ENCODE measurements at regions of chr3 and their contacts with region 1.

Region 1: GRCh38 chr3:49007068-49007770 is at the start of gene WDR6:
- DNase-seq: peak; percentile 95
- ATAC-seq: peak; percentile 92
- H3K4me3 Mint-ChIP-seq: peak within 1 kb of the TSS; percentile 96
- H3K27ac Mint-ChIP-seq: peak within 1 kb of the TSS; percentile 99
- H3K4me1 Mint-ChIP-seq: peaks cover 18% of the 10 kb centered on the region
- H3K27me3 Mint-ChIP-seq: no peaks in the 10 kb centered on the region
- total RNA-seq, gene WDR6: 185 to 207 TPM

Region 2: GRCh38 chr3:48898383-48899234 is 108.6 kb before region 1 on chr3 and contains the start of gene SLC25A20:
- POLR2A ChIA-PET with region 1: interaction called, 12 read pairs
- DNase-seq: peak; percentile 96
- ATAC-seq: peak; percentile 93
- H3K4me3 Mint-ChIP-seq: peak within 1 kb of the TSS; percentile 95
- H3K27ac Mint-ChIP-seq: peak within 1 kb of the TSS; percentile 93
- H3K4me1 Mint-ChIP-seq: peaks cover 35% of the 10 kb centered on the region
- H3K27me3 Mint-ChIP-seq: no peaks in the 10 kb centered on the region
- total RNA-seq, gene SLC25A20: 27.5 to 28.3 TPM

Region 3: GRCh38 chr3:48926425-48927392 is 80.5 kb before region 1 on chr3:
- POLR2A ChIA-PET with region 1: no interaction called
- DNase-seq: no peak
- ATAC-seq: peak; percentile 42
- H3K4me3 Mint-ChIP-seq: peak overlapping the region; percentile 51
- H3K27ac Mint-ChIP-seq: peak overlapping the region; percentile 77
- H3K4me1 Mint-ChIP-seq: peaks cover 48% of the 10 kb centered on the region
- H3K27me3 Mint-ChIP-seq: no peaks in the 10 kb centered on the region

Region 4: GRCh38 chr3:48989796-48990635 is 17.2 kb before region 1 on chr3 and contains the start of gene P4HTM:
- POLR2A ChIA-PET with region 1: interaction called, 112 read pairs
- DNase-seq: peak; percentile 84
- ATAC-seq: peak; percentile 81
- H3K4me3 Mint-ChIP-seq: peak within 1 kb of the TSS; percentile 88
- H3K27ac Mint-ChIP-seq: peak within 1 kb of the TSS; percentile 91
- H3K4me1 Mint-ChIP-seq: peaks cover 38% of the 10 kb centered on the region
- H3K27me3 Mint-ChIP-seq: no peaks in the 10 kb centered on the region
- total RNA-seq, gene P4HTM: 57.4 to 57.7 TPM

Region 5: GRCh38 chr3:49021813-49022687 is 14.8 kb after region 1 on chr3 and contains the start of gene NDUFAF3:
- POLR2A ChIA-PET with region 1: interaction called, 244 read pairs
- DNase-seq: peak; percentile 95
- ATAC-seq: peak; percentile 71
- H3K4me3 Mint-ChIP-seq: peak within 1 kb of the TSS; percentile 96
- H3K27ac Mint-ChIP-seq: peak within 1 kb of the TSS; percentile 98
- H3K4me1 Mint-ChIP-seq: peaks cover 31% of the 10 kb centered on the region
- H3K27me3 Mint-ChIP-seq: no peaks in the 10 kb centered on the region
- total RNA-seq, gene NDUFAF3: 78.9 to 82.4 TPM

Region 6: GRCh38 chr3:49028673-49029562 is 21.7 kb after region 1 on chr3 and contains the start of gene IMPDH2:
- POLR2A ChIA-PET with region 1: interaction called, 244 read pairs
- DNase-seq: peak; percentile 96
- ATAC-seq: peak; percentile 92
- H3K4me3 Mint-ChIP-seq: peak within 1 kb of the TSS; percentile 94
- H3K27ac Mint-ChIP-seq: peak within 1 kb of the TSS; percentile 85
- H3K4me1 Mint-ChIP-seq: peaks cover 37% of the 10 kb centered on the region
- H3K27me3 Mint-ChIP-seq: no peaks in the 10 kb centered on the region
- total RNA-seq, gene IMPDH2: 145 to 146 TPM

Region 7: DNA sequence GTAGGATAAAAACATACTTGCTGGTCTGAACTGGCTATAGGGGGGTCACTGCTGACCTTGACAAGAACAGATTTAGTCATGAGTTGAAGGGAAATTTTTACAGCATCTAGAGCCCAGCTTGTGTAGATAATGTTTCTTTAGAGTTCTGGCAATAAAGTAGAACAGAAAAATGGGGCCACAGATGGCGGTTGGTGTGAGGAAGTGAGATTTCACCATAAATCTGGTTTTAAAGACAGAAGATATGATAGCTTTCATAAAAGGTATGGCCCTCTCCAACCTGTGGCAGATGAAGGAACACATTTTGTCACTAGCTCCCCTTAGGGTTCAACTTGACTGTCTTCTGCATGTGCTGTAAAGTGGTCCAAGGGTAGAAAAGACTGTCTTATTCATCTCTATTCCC is 46.3 kb after region 1 on chr3:
- POLR2A ChIA-PET with region 1: no interaction called
- DNase-seq: no peak
- ATAC-seq: no peak
- H3K4me3 Mint-ChIP-seq: no peak overlapping the region
- H3K27ac Mint-ChIP-seq: no peak overlapping the region
- H3K4me1 Mint-ChIP-seq: peaks cover 2% of the 10 kb centered on the region
- H3K27me3 Mint-ChIP-seq: no peaks in the 10 kb centered on the region

Region 8: GRCh38 chr3:49153349-49153912 is 146.2 kb after region 1 on chr3:
- POLR2A ChIA-PET with region 1: no interaction called
- DNase-seq: no peak
- ATAC-seq: no peak
- H3K4me3 Mint-ChIP-seq: no peak overlapping the region
- H3K27ac Mint-ChIP-seq: no peak overlapping the region
- H3K4me1 Mint-ChIP-seq: peaks cover 4% of the 10 kb centered on the region
- H3K27me3 Mint-ChIP-seq: no peaks in the 10 kb centered on the region

Region 9: DNA sequence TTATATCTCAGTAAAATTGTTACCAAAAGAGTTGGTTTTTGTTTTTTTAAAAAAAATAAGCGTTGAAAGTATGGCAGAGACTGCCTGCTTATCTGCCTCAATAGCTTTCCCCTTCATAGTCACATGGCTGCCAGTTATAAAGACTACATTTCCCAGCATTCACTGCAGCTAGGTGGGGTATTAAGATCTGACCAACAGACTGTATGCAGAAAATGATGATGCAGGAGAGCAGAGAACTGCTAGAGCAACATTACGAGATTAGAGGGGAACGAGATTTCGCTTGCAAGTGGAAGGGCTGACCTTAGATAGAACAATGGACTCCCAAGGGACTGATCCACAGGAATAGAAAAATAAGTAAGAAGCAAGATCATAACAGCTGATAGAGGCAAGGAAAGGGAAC is 390.3 kb after region 1 on chr3:
- POLR2A ChIA-PET with region 1: no interaction called
- DNase-seq: no peak
- ATAC-seq: no peak
- H3K4me3 Mint-ChIP-seq: no peak overlapping the region
- H3K27ac Mint-ChIP-seq: peak overlapping the region; percentile 45
- H3K4me1 Mint-ChIP-seq: peaks cover 45% of the 10 kb centered on the region
- H3K27me3 Mint-ChIP-seq: no peaks in the 10 kb centered on the region